Colonic mucosa (tissue), 4 donors: ENCODE measurements at regions of chr1 and their contacts with region 1.

Region 1: DNA sequence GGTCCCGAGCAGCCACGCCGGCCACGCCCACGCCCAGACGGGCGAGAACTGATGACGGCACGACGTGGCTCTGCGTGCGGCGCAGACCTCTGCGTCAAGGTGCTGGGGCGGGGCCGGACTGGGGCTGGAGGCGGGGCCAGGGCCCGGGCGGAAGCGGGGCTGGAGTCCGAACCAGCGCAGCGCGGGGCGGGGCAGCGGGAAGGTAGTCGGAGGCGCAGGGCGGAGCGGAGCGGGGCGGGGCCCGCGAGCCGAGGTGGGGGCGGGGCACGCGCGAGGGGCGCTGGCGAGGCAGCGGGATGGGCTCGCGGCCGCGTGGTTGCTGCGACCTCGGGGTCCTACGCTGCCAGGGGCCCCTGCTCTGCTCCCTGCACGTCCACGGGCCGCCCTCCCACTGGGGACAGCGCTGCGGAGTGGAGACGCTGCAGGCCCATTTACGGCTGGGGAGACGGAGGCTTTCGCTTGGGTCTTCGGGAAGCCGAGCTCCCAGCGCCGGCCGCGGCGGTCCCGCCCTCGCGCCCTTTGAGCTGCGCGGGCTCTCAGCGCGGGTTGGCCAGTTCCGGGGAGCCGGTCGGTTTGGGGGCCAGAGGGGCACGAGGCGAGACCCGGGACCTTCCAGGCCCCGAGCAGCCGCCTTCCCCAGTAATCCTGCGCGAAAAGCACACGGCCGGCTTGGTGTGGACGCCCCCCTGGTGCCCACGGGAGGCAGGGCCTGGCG is at the start of gene PEX10:
- DNase-seq: peak; percentile 98
- H3K4me3 ChIP-seq: peak within 1 kb of the TSS; percentile 99
- H3K27ac ChIP-seq: peak within 1 kb of the TSS; percentile 85
- H3K4me1 ChIP-seq: peaks cover 12% of the 10 kb centered on the region
- H3K27me3 ChIP-seq: no peaks in the 10 kb centered on the region
- CTCF ChIP-seq: no peak
- total RNA-seq, gene PEX10: 15.0 to 22.7 TPM

Region 2: GRCh38 chr1:2270260-2271100 is 142.2 kb before region 1 on chr1:
- intact Hi-C with region 1: no loop called
- DNase-seq: no peak
- H3K4me3 ChIP-seq: no peak overlapping the region
- H3K27ac ChIP-seq: no peak overlapping the region
- H3K4me1 ChIP-seq: peaks cover 21% of the 10 kb centered on the region
- H3K27me3 ChIP-seq: no peaks in the 10 kb centered on the region
- CTCF ChIP-seq: no peak

Region 3: DNA sequence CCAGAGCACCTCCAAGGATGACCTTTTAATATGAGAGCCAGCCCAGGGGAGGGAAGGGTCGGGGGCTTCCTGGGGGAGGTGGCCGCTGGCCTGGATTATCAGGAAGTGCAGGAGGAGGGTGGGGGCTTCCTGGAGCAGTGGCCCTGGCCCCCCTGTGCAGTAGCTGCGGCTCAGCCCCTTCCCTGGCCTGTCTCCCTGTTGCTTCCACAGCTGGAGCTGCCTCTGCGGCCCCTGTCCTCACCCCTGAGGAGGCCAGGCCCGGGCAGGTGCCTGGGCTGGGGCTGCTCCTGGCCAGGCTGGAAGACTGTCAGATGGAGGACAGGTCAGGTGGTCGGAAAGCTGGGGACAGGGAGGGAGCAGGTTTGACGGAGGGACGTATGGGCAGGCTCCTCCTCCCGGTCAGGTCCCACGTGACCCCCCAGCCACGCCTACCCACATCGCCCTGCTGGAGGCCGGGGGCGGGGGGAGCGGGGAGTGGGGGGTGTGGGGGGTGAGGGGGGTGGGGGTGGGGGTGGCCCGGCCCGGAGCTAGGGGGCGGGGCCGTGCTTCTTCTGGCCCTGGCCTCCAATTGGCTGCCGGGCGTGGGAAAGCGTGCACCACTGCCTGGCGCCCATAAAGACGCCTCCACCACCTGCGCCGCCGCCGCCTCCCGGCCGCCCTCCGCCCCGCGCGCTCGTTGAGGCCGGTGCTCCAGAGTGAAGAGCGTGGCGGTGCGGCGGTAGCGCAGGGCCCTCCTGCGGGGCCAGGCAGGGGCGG is 133.3 kb after region 1 on chr1:
- intact Hi-C with region 1: loop called (anchors 5 kb)
- DNase-seq: peak; percentile 93
- H3K4me3 ChIP-seq: peak overlapping the region; percentile 55
- H3K27ac ChIP-seq: peak overlapping the region; percentile 100
- H3K4me1 ChIP-seq: peaks cover 20% of the 10 kb centered on the region
- H3K27me3 ChIP-seq: peaks cover 3% of the 10 kb centered on the region
- CTCF ChIP-seq: no peak

Region 4: GRCh38 chr1:2784854-2785572 is 372.3 kb after region 1 on chr1:
- intact Hi-C with region 1: loop called (anchors 5 kb)
- DNase-seq: no peak
- H3K4me3 ChIP-seq: no peak overlapping the region
- H3K27ac ChIP-seq: no peak overlapping the region
- H3K4me1 ChIP-seq: no peaks in the 10 kb centered on the region
- H3K27me3 ChIP-seq: peaks cover 3% of the 10 kb centered on the region
- CTCF ChIP-seq: no peak